PC-9 (cell line): ENCODE measurements at regions of chr14 and their contacts with region 1.

Region 1: DNA sequence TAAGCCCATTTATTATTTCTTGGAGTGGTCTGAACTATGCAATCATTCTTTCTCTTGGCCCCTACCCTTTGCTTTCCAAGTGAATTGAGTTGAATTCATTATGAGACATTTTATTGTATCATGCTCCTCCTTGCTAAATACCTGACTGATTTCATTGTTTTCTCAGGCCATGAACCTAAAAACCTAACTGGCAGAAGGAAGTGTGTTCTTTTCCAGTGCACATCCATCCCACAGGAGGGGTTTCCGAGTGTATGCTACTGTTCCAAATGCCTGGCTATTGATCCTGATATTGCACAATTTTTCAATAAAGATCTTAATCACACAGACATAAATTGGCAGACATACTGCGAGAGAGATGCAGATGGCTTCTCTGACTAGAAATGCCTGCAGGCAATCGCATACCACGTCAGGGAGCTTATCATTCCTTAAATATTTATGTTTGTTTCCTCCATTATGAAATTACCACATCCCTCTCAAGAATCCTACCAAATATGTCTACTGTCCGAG is 162.2 kb upstream of the EGLN3 start:
- DNase-seq: peak; percentile 59 to 95
- H3K4me3 ChIP-seq: 0 out of 2 replicates have a peak overlapping the region, but pooled peaks have one; percentile 18
- H3K27ac ChIP-seq: peak overlapping the region; percentile 54
- H3K4me1 ChIP-seq: peaks cover 31% of the 10 kb centered on the region
- H3K27me3 ChIP-seq: no peaks in the 10 kb centered on the region
- CTCF ChIP-seq: no peak

Region 2: GRCh38 chr14:34081576-34082136 is 31.4 kb before region 1 on chr14:
- CTCF ChIA-PET with region 1: no interaction called
- POLR2A ChIA-PET with region 1: no interaction called
- intact Hi-C with region 1: no loop called
- DNase-seq: peak; percentile 49 to 91
- H3K4me3 ChIP-seq: no peak overlapping the region; the same call in 1 of the 2 replicates
- H3K27ac ChIP-seq: peak overlapping the region; percentile 85
- H3K4me1 ChIP-seq: peaks cover 64% of the 10 kb centered on the region
- H3K27me3 ChIP-seq: no peaks in the 10 kb centered on the region
- CTCF ChIP-seq: no peak

Region 3: GRCh38 chr14:34136996-34137745 is 24.1 kb after region 1 on chr14:
- CTCF ChIA-PET with region 1: no interaction called
- POLR2A ChIA-PET with region 1: no interaction called
- intact Hi-C with region 1: loop called (anchors 1 kb)
- DNase-seq: no peak
- H3K4me3 ChIP-seq: no peak overlapping the region
- H3K27ac ChIP-seq: no peak overlapping the region
- H3K4me1 ChIP-seq: peaks cover 11% of the 10 kb centered on the region; the same call in 1 of the 2 replicates
- H3K27me3 ChIP-seq: no peaks in the 10 kb centered on the region
- CTCF ChIP-seq: no peak

Region 4: GRCh38 chr14:34275078-34275477 is 162.0 kb after region 1 on chr14:
- CTCF ChIA-PET with region 1: no interaction called
- POLR2A ChIA-PET with region 1: interaction called, 14 read pairs
- intact Hi-C with region 1: no loop called
- DNase-seq: no peak
- H3K4me3 ChIP-seq: no peak overlapping the region
- H3K27ac ChIP-seq: no peak overlapping the region
- H3K4me1 ChIP-seq: no peaks in the 10 kb centered on the region
- H3K27me3 ChIP-seq: no peaks in the 10 kb centered on the region
- CTCF ChIP-seq: no peak